CD14-positive monocyte (primary cell): ENCODE measurements at regions of chr11 and their contacts with region 1.

Region 1: DNA sequence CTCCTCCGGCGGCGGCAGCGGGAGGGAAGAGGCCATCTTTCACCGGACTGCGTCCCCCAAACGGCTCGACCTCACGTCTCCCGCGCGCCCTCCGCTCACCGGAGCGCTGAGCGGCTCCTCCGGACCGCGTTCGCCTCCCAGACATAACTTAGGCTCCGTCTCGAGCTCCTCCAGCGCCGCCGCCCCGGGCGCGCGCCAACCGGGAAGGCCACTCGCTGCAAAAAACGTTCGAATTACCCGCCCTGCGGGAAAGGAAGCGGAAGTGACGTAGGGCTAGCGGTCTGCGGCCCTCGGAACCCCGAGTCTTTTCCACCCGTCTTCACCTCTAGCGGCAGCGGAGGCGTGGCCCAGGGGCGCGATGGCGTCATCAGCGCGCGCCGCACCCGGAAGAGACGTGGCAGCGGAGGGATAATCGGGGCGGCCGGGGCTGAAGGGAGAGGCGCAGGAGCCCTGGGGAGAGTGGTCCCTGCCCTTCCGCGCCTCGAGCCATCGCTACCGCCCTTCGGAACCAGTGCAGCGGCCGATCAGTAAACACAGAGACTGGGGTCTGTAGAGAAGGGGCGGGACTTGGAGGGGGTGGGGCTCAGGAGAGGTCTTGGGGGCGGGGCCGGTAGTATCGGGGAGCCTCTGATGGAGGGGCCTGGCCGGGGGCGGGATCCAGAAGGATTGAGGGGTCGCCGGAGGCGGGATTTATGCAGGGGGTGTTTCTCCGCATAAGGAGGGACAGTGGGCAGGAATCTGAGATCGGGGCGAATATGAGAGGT is at the starts of genes CDCA5 and ZFPL1:
- DNase-seq: peak; percentile 95 to 97 (median 96)
- H3K4me3 ChIP-seq: peak within 1 kb of the TSS; percentile 62 to 95 (median 84)
- H3K4me3 Mint-ChIP-seq: peak within 1 kb of the TSS; percentile 88 to 95
- H3K27ac ChIP-seq: peak within 1 kb of the TSS; percentile 73 to 92
- H3K27ac Mint-ChIP-seq: peak within 1 kb of the TSS; percentile 93 to 98 (median 95)
- H3K4me1 ChIP-seq: peaks cover 33 to 43% of the 10 kb centered on the region in 2 donors
- H3K4me1 Mint-ChIP-seq: peaks cover 44% of the 10 kb centered on the region
- H3K27me3 ChIP-seq: no peaks in the 10 kb centered on the region
- H3K27me3 Mint-ChIP-seq: no peaks in the 10 kb centered on the region
- CTCF ChIP-seq: no peak
- polyA plus RNA-seq, gene CDCA5: 0.20 to 0.28 TPM in 2 of 3 donors, not detected in the other
- polyA plus RNA-seq, gene ZFPL1: 25.1 to 41.1 (median 27.2) TPM

Region 2: GRCh38 chr11:65013692-65014145 is 70.3 kb before region 1 on chr11:
- intact Hi-C with region 1: loop called in 1 of 2 experiments (anchors 5 kb)
- DNase-seq: peak; percentile 81 to 82 (median 82)
- H3K4me3 ChIP-seq: peak overlapping the region; percentile 52 to 96 (median 70)
- H3K4me3 Mint-ChIP-seq: peak overlapping the region; percentile 90 to 95
- H3K27ac ChIP-seq: peak overlapping the region; percentile 94 to 97
- H3K27ac Mint-ChIP-seq: peak overlapping the region; percentile 94 to 98 (median 97)
- H3K4me1 ChIP-seq: peaks cover 22 to 32% of the 10 kb centered on the region in 2 donors
- H3K4me1 Mint-ChIP-seq: peaks cover 35% of the 10 kb centered on the region
- H3K27me3 ChIP-seq: no peaks in the 10 kb centered on the region
- H3K27me3 Mint-ChIP-seq: no peaks in the 10 kb centered on the region
- CTCF ChIP-seq: peak; percentile 87

Region 3: DNA sequence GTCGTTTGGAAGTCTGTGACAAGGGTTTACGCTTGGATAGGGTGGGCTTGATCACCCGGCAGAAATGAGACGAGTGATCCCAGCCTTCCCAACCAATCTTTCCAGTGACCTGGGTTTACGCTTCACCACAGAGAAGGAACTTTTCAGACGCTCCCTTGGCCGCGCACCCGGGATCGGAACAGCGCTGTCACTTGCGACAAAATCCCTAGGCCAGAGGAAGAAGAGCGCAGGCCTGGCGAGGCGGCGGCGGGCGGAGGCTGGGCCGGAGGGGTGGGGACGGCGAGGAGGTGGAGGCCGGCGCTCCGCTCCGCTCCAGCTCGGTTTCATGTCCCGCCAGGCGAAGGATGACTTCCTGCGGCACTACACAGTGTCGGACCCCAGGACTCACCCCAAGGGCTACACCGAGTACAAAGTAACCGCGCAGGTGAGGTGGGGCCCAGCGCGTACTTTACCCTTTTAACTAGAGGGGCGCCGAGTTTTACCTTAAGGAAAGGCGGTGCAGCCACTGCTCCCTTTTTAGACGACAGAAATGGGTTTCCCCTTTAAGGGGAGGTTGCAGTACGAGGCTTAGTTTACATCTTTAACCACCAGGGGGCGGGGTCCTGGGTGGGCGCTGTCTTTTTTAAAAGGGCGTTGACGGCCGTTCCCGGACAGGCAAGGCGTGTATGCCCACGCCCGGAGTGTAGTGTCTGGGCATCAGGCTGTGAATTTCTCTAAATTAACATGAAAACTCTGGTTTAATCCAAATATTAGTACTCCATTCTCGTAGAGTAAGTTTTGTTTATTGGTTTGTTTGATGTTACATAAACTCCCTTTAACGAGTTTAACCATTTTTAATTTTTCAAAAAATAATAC is 56.6 kb before region 1 on chr11 and contains the start of gene SNX15:
- intact Hi-C with region 1: loop called (anchors 5 kb)
- DNase-seq: peak; percentile 87 to 93 (median 88)
- H3K4me3 ChIP-seq: peak within 1 kb of the TSS; percentile 45 to 78 (median 66)
- H3K4me3 Mint-ChIP-seq: peak within 1 kb of the TSS; percentile 78 to 83
- H3K27ac ChIP-seq: peak within 1 kb of the TSS; percentile 63 to 78
- H3K27ac Mint-ChIP-seq: peak within 1 kb of the TSS; percentile 71 to 95 (median 90)
- H3K4me1 ChIP-seq: peaks cover 14 to 20% of the 10 kb centered on the region in 2 donors
- H3K4me1 Mint-ChIP-seq: peaks cover 25% of the 10 kb centered on the region
- H3K27me3 ChIP-seq: no peaks in the 10 kb centered on the region
- H3K27me3 Mint-ChIP-seq: peaks cover 0 to 1% (median 0%) of the 10 kb centered on the region in 3 donors
- CTCF ChIP-seq: peak; percentile 90
- polyA plus RNA-seq, gene SNX15: 16.2 to 26.7 (median 17.8) TPM

Region 4: DNA sequence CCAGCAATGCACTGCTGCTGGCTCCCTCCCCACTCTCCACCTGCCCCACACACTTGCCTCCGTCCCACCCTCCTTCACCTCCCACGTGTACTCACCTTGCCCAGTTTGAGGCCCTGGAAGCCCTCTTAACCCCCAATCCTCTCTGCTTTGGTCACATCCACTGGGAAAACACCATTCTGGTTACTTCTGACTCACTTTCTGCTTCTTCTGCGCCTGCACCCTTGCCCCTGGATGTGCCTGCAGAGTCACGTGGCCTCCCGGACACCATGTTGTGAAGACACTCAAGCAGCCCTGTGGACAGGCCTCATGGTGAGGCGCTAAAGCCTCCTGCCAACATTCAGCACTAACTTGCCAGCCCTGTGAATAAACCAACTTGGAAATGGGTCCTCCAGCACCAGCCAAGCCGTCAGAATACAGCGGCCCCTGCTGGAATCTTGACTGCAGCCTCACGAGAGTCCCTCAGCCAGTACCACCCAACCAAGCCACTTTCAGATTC is 23.1 kb before region 1 on chr11:
- intact Hi-C with region 1: no loop called
- DNase-seq: no peak
- H3K4me3 ChIP-seq: no peak overlapping the region
- H3K4me3 Mint-ChIP-seq: no peak overlapping the region
- H3K27ac ChIP-seq: no peak overlapping the region
- H3K27ac Mint-ChIP-seq: no peak overlapping the region
- H3K4me1 ChIP-seq: peaks cover 5 to 8% of the 10 kb centered on the region in 2 donors
- H3K4me1 Mint-ChIP-seq: peaks cover 31% of the 10 kb centered on the region
- H3K27me3 ChIP-seq: no peaks in the 10 kb centered on the region
- H3K27me3 Mint-ChIP-seq: peaks cover 5 to 17% (median 12%) of the 10 kb centered on the region in 3 donors
- CTCF ChIP-seq: no peak

Region 5: GRCh38 chr11:65095974-65096806 is 12.2 kb after region 1 on chr11 and contains the start of gene VPS51:
- intact Hi-C with region 1: loop called in 1 of 2 experiments (anchors 1 kb)
- DNase-seq: peak; percentile 83 to 90 (median 88)
- H3K4me3 ChIP-seq: peak within 1 kb of the TSS; percentile 74 to 95 (median 85)
- H3K4me3 Mint-ChIP-seq: peak within 1 kb of the TSS; percentile 94 to 95
- H3K27ac ChIP-seq: peak within 1 kb of the TSS; percentile 66 to 88
- H3K27ac Mint-ChIP-seq: peak within 1 kb of the TSS; percentile 86 to 98 (median 95)
- H3K4me1 ChIP-seq: peaks cover 9 to 19% of the 10 kb centered on the region in 2 donors
- H3K4me1 Mint-ChIP-seq: peaks cover 15% of the 10 kb centered on the region
- H3K27me3 ChIP-seq: no peaks in the 10 kb centered on the region
- H3K27me3 Mint-ChIP-seq: peaks cover 0 to 3% (median 0%) of the 10 kb centered on the region in 3 donors
- CTCF ChIP-seq: no peak
- polyA plus RNA-seq, gene VPS51: 37.2 to 77.3 (median 39.4) TPM

Region 6: DNA sequence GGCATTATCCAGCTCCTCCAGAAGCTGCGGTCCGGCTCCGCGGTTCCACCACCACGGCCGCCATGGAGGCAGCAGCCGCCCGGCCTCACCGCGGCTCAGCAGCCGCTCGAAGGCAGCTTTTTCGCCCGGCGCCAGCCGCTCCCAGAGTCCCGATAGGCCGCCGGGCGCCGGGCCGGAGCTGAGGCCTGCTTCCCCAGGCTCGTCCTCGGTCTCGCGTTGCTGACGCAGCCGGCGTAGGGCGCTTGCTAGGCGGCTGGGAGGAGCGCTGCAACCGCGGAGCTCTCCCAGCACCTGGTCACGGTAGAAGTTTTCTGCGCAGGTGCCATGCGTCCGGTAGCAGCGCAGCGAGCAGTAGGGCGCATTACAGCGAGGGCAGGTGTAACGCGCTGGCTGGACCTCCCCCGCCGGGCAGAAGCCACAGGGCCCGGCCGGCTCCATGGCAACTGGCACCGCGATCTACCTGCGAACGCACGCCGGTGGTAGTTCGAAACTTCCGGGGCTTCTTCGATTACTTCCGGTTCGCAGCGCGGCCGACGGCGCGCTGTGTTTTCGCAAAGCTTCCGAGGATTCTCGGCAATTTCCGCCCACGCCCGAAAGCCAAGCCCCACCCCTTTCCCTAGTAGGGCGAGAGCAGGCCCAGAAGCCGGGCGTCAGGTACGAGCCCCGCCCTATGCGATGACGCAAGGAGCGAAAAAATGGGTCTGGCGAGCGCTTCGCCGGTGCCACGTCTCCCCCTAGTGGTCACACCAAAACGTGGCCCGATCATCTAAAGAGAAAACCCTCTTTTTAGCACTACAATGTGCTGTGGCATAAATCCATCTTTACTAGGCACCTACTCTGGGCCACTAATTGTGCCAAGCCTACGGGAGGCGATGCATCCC is 33.4 kb after region 1 on chr11 and contains the start of gene ZNHIT2:
- intact Hi-C with region 1: loop called (anchors 2 kb)
- DNase-seq: peak; percentile 99
- H3K4me3 ChIP-seq: peak within 1 kb of the TSS; percentile 60 to 93 (median 91)
- H3K4me3 Mint-ChIP-seq: peak within 1 kb of the TSS; percentile 82 to 90
- H3K27ac ChIP-seq: peak within 1 kb of the TSS; percentile 67 to 85
- H3K27ac Mint-ChIP-seq: peak within 1 kb of the TSS; percentile 79 to 90 (median 88)
- H3K4me1 ChIP-seq: peaks cover 30 to 48% of the 10 kb centered on the region in 2 donors
- H3K4me1 Mint-ChIP-seq: peaks cover 39% of the 10 kb centered on the region
- H3K27me3 ChIP-seq: peaks cover 0 to 15% of the 10 kb centered on the region in 2 donors
- H3K27me3 Mint-ChIP-seq: peaks cover 13 to 17% (median 13%) of the 10 kb centered on the region in 3 donors
- CTCF ChIP-seq: peak; percentile 94
- polyA plus RNA-seq, gene ZNHIT2: 2.1 to 9.4 (median 5.8) TPM